Activated B cell treated with CpG ODN at 0.5 μM for 24 hours (primary cell): ENCODE measurements at regions of chr4 and their contacts with region 1.

Region 1: GRCh38 chr4:110193822-110194761 is 4.3 kb downstream of the ELOVL6 start:
- DNase-seq: peak; percentile 31
- ATAC-seq: peak; percentile 79
- H3K4me3 Mint-ChIP-seq: peak overlapping the region; percentile 51
- H3K27ac Mint-ChIP-seq: peak overlapping the region; percentile 62
- H3K4me1 Mint-ChIP-seq: peaks cover 24% of the 10 kb centered on the region
- H3K27me3 Mint-ChIP-seq: no peaks in the 10 kb centered on the region
- CTCF ChIP-seq: no peak

Region 2: DNA sequence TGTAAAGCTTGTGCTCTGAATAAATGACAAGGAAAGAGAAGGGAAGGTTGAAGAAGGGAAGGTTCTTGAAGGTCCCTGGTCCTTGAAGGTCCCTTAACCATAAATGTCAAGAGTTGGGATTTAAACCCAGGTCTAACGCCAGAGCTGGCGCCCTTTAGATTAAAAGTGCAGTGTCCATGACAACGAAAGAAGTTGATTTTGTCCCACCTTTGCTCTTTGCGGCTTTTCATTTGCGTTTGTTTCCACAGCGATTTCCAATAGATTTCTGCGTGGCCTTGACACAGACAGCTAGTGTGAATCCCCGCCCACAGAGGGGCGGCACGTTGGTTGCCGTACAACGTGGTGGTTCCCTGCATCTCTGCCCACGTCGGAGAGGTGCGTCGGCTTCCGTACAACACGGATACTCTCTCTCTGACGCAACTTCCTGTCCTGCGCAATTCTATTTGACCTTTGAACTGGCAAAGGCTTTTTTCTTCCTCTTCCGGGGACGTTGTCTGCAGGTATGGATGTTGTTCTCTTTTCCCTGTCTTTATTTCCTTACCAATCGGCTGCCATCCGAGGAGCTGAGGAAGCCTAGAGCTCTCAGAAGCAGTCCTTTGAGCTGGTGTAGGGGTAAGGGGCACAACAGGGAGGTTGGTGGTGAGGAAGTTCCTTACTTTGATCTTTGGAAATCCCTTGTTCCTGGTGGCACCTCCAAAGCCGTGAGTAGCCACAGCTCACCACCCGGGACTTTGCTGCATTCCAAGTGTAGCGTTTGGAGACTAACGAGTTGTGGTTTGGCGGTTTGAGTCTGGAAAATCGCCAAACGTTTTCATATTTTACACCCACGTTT is 1573.8 kb before region 1 on chr4 and contains the start of gene RPL34:
- CTCF ChIA-PET with region 1: no interaction called
- POLR2A ChIA-PET with region 1: no interaction called
- intact Hi-C with region 1: loop called (anchors 1 kb)
- DNase-seq: peak; percentile 83
- ATAC-seq: peak; percentile 100
- H3K4me3 Mint-ChIP-seq: peak within 1 kb of the TSS; percentile 95
- H3K27ac Mint-ChIP-seq: peak within 1 kb of the TSS; percentile 95
- H3K4me1 Mint-ChIP-seq: peaks cover 50% of the 10 kb centered on the region
- H3K27me3 Mint-ChIP-seq: no peaks in the 10 kb centered on the region
- CTCF ChIP-seq: no peak
- total RNA-seq, gene RPL34: 2,310 and 2,662 TPM in 2 replicates

Region 3: GRCh38 chr4:109729718-109730618 is 464.1 kb before region 1 on chr4 and contains the start of gene PLA2G12A:
- CTCF ChIA-PET with region 1: no interaction called
- POLR2A ChIA-PET with region 1: no interaction called
- intact Hi-C with region 1: loop called (anchors 5 kb)
- DNase-seq: peak; percentile 77
- ATAC-seq: peak; percentile 90
- H3K4me3 Mint-ChIP-seq: peak within 1 kb of the TSS; percentile 90
- H3K27ac Mint-ChIP-seq: peak within 1 kb of the TSS; percentile 79
- H3K4me1 Mint-ChIP-seq: peaks cover 12% of the 10 kb centered on the region
- H3K27me3 Mint-ChIP-seq: no peaks in the 10 kb centered on the region
- CTCF ChIP-seq: no peak
- total RNA-seq, gene PLA2G12A: 6.7 and 9.6 TPM in 2 replicates

Region 4: DNA sequence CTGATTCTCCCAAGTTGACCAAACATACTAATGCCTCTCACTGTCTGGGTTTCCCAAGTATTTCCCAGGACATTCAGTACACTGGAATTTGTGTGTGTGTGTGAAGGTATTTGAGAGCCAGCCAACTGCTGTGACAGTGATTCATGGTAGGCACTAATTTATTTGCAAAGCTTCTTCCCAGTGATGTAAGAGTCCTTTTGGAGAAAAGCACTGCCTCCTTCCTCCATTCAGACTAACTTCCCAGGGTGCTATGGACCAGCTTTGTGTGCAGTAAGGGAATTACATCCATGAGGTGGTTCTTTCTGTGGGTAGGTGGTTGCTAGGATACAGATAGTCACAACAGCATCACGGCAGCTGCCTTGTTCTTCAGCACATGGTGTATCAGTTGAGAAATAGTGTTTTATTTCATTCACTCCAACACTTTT is 272.7 kb before region 1 on chr4:
- CTCF ChIA-PET with region 1: no interaction called
- POLR2A ChIA-PET with region 1: no interaction called
- intact Hi-C with region 1: no loop called
- DNase-seq: no peak
- ATAC-seq: no peak
- H3K4me3 Mint-ChIP-seq: no peak overlapping the region
- H3K27ac Mint-ChIP-seq: no peak overlapping the region
- H3K4me1 Mint-ChIP-seq: no peaks in the 10 kb centered on the region
- H3K27me3 Mint-ChIP-seq: peaks cover under 1% of the 10 kb centered on the region
- CTCF ChIP-seq: no peak

Region 5: GRCh38 chr4:109939190-109939589 is 254.9 kb before region 1 on chr4:
- CTCF ChIA-PET with region 1: no interaction called
- POLR2A ChIA-PET with region 1: no interaction called
- intact Hi-C with region 1: no loop called
- DNase-seq: no peak
- ATAC-seq: no peak
- H3K4me3 Mint-ChIP-seq: no peak overlapping the region
- H3K27ac Mint-ChIP-seq: no peak overlapping the region
- H3K4me1 Mint-ChIP-seq: no peaks in the 10 kb centered on the region
- H3K27me3 Mint-ChIP-seq: peaks cover 13% of the 10 kb centered on the region
- CTCF ChIP-seq: no peak

Region 6: GRCh38 chr4:109990261-109991257 is 203.5 kb before region 1 on chr4:
- CTCF ChIA-PET with region 1: no interaction called
- POLR2A ChIA-PET with region 1: no interaction called
- intact Hi-C with region 1: loop called (anchors 5 kb)
- DNase-seq: no peak
- ATAC-seq: peak; percentile 80
- H3K4me3 Mint-ChIP-seq: no peak overlapping the region
- H3K27ac Mint-ChIP-seq: peak overlapping the region; percentile 74
- H3K4me1 Mint-ChIP-seq: peaks cover 26% of the 10 kb centered on the region
- H3K27me3 Mint-ChIP-seq: no peaks in the 10 kb centered on the region
- CTCF ChIP-seq: no peak

Region 7: GRCh38 chr4:110484740-110485139 is 290.6 kb after region 1 on chr4:
- CTCF ChIA-PET with region 1: no interaction called
- POLR2A ChIA-PET with region 1: no interaction called
- intact Hi-C with region 1: loop called (anchors 1 kb)
- DNase-seq: no peak
- ATAC-seq: no peak
- H3K4me3 Mint-ChIP-seq: no peak overlapping the region
- H3K27ac Mint-ChIP-seq: no peak overlapping the region
- H3K4me1 Mint-ChIP-seq: peaks cover 13% of the 10 kb centered on the region
- H3K27me3 Mint-ChIP-seq: peaks cover 22% of the 10 kb centered on the region
- CTCF ChIP-seq: no peak